ENCODE measurements at regions of chr9 and their contacts with region 1.

Region 1: DNA sequence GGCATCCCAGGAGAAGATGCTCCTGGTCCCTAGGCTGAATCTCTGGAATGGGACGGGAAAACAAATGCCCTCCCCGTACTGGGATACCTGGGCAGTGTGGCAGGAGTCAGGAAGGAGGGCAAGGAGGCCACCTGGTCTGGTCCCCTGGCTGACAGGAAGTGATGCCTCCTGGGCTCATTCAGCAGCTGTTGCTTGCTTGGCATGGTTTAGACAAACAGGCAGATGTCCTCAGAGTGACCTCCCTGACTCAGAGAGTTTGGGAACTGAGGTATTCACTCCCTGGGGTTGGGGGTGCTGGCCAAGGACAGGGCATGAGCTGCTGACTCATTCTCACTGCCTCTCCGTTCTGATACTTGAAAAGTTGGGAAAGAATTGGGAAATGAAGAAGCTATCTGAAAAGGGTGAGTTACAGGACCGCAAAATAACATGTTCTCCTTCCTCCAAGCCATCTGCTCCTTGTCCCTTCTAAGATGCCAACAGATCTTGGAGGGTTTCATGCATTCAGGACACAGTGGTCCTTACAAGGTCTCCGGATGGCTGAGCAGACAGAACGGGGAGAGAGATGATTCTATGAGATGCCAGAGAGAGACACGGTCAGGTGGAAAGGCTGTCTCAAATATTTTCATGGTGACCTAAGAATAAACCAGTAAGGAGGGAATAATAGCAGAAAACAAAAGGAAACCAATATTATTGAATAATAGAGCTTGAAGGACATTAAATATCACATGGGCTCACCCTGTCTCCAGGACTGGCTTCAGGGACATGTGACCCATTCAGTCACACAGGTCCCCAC is 534.5 kb downstream of the BNC2 start:
- DNase-seq: peak; percentile 82 to 98
- H3K4me3 ChIP-seq: peak overlapping the region; percentile 35; the same call in 1 of the 2 replicates
- H3K27ac ChIP-seq: peak overlapping the region; percentile 100
- H3K4me1 ChIP-seq: peaks cover 45% of the 10 kb centered on the region
- H3K27me3 ChIP-seq: no peaks in the 10 kb centered on the region
- CTCF ChIP-seq: no peak

Region 2: DNA sequence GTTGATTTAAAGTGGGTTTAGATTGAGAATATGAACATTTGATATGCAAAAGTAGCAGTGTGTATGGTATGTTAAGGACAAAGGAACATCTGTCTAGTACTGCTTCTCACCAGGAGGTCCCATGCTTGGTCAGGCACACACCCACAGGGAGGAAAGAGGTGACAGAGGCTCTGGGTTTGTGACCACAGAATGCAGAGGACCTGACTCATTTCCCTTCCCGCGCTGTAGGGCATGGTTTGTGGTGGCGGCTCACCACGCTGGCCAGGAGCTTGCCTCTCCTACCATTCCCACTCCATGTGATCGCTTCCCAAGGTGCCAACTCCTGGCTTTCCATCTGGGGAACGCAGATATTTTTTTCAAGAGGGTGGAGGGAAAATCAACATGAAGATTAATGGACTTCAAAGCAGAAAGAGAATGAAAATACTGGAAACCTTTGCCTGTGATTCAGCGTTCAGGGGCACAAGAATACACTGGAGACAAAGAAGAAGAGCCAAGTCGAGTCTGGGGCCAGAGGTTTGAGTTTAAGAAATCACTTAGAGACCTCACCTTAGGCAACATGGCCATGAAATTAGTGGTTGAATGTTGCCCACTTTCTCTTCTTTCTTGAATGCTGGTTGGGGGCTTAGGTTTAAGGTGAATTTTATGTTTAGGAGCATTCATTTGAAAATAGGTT is 305.3 kb before region 1 on chr9:
- CTCF ChIA-PET with region 1: no interaction called
- POLR2A ChIA-PET with region 1: no interaction called
- intact Hi-C with region 1: loop called (anchors 2 kb)
- DNase-seq: peak; percentile 79 to 85
- H3K4me3 ChIP-seq: no peak overlapping the region
- H3K27ac ChIP-seq: peak overlapping the region; percentile 77
- H3K4me1 ChIP-seq: peaks cover 12% of the 10 kb centered on the region
- H3K27me3 ChIP-seq: no peaks in the 10 kb centered on the region
- CTCF ChIP-seq: no peak

Region 3: GRCh38 chr9:16241231-16241630 is 94.8 kb before region 1 on chr9:
- CTCF ChIA-PET with region 1: no interaction called
- POLR2A ChIA-PET with region 1: no interaction called
- intact Hi-C with region 1: loop called (anchors 5 kb)
- DNase-seq: no peak
- H3K4me3 ChIP-seq: no peak overlapping the region
- H3K27ac ChIP-seq: no peak overlapping the region; the same call in 1 of the 2 replicates
- H3K4me1 ChIP-seq: peaks cover 11% of the 10 kb centered on the region
- H3K27me3 ChIP-seq: no peaks in the 10 kb centered on the region
- CTCF ChIP-seq: no peak

Region 4: GRCh38 chr9:16368237-16369087 is 32.5 kb after region 1 on chr9:
- CTCF ChIA-PET with region 1: no interaction called
- POLR2A ChIA-PET with region 1: interaction called, 6 read pairs
- intact Hi-C with region 1: loop called (anchors 1 kb)
- DNase-seq: peak; percentile 25 to 87
- H3K4me3 ChIP-seq: no peak overlapping the region
- H3K27ac ChIP-seq: peak overlapping the region; percentile 96
- H3K4me1 ChIP-seq: peaks cover 37% of the 10 kb centered on the region
- H3K27me3 ChIP-seq: no peaks in the 10 kb centered on the region
- CTCF ChIP-seq: no peak

Region 5: GRCh38 chr9:16509997-16510396 is 174.0 kb after region 1 on chr9:
- CTCF ChIA-PET with region 1: no interaction called
- POLR2A ChIA-PET with region 1: no interaction called
- intact Hi-C with region 1: loop called (anchors 5 kb)
- DNase-seq: no peak
- H3K4me3 ChIP-seq: no peak overlapping the region
- H3K27ac ChIP-seq: no peak overlapping the region
- H3K4me1 ChIP-seq: no peaks in the 10 kb centered on the region
- H3K27me3 ChIP-seq: no peaks in the 10 kb centered on the region
- CTCF ChIP-seq: no peak

Region 6: DNA sequence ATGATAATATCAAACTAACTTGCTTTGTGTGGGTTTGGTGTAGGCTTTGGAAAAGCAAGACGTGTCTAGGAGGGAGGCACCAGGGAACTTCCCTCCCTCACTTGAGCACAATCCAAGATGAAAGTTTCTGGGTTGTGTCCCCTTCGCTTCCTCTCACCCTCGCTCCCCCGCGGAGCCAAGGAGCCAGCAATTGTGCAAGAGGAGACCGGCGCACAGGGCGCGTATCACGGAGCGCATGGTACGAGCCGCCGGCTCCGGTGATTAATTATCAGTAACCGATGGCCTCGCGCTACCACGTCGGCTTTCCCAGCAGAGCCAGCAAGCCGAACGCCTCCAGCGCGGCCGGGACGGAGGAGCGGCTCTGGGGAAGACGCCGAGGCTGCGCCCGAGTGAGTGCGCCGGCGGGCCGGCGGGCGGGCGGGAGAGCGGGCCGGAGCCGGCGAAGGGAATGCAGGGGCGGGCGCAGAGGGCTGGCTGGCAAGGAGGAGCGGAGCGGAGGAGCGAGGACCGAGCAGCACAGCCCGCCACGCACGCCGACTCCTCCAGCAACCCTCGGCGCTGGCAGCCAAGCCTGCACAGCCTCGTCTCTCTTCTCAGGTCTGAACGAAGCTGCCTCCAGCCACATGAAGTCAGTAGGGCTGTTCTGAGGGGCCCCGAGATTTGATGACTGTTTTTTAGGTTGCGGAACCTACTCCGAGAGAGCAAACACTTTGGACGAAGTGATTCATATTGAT is 390.9 kb after region 1 on chr9:
- CTCF ChIA-PET with region 1: no interaction called
- POLR2A ChIA-PET with region 1: no interaction called
- intact Hi-C with region 1: loop called (anchors 1 kb)
- DNase-seq: peak; percentile 58 to 65
- H3K4me3 ChIP-seq: peak overlapping the region; percentile 77
- H3K27ac ChIP-seq: peak overlapping the region; percentile 92
- H3K4me1 ChIP-seq: peaks cover 27% of the 10 kb centered on the region
- H3K27me3 ChIP-seq: no peaks in the 10 kb centered on the region
- CTCF ChIP-seq: no peak

Measured in PC-9 (cell line).